ENCODE measurements at regions of chr5 and their contacts with region 1.

Region 1: DNA sequence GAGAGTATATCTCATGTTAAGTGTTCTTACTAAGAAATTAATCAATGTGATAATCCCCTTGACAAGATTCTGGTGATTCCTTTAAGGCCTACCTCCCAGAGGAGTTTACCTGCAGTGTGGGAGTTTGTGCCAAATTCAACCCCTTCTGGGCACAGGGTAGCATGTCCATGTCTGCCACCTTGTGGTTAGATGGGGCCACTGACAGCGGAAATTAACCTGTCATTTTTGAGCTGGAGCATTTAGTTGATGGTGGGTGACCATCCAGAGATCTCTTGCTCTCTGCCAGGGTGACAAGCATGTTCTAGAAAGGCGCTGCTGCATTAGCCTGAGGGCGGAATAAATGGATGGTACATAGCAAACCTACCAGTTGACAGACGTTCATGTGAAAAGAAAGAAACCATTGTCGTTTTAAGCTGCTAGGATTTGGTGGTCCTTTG is 132.2 kb downstream of the FBXO4 start:
- DNase-seq: peak; percentile 69
- ATAC-seq: peak; percentile 75
- H3K4me3 Mint-ChIP-seq: no peak overlapping the region
- H3K27ac Mint-ChIP-seq: no peak overlapping the region
- H3K4me1 Mint-ChIP-seq: no peaks in the 10 kb centered on the region
- H3K27me3 Mint-ChIP-seq: peaks cover 2% of the 10 kb centered on the region

Region 2: GRCh38 chr5:41707853-41708603 is 349.2 kb before region 1 on chr5:
- CTCF ChIA-PET with region 1: interaction called, 3 read pairs
- POLR2A ChIA-PET with region 1: no interaction called
- intact Hi-C with region 1: loop called in 1 of 2 experiments (anchors 5 kb)
- DNase-seq: no peak
- ATAC-seq: no peak
- H3K4me3 Mint-ChIP-seq: no peak overlapping the region
- H3K27ac Mint-ChIP-seq: no peak overlapping the region
- H3K4me1 Mint-ChIP-seq: no peaks in the 10 kb centered on the region
- H3K27me3 Mint-ChIP-seq: peaks cover 10% of the 10 kb centered on the region

Region 3: DNA sequence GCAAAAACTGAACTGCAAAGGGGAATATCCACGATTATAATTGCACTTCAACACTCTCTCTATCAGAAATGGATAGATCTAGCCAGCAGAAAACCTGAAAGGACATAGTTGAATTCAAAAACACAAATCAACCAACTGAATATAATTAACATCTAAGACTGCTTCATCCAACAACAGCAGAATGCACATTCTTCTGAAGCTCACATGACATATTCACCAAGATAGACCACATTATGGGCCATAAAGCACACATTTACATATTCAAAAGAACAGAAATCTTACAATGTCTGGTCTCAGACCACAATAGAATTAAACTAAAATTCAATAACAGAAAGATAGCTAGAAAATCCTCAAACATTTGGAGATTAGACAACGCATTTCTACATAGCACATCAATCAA is 13.9 kb before region 1 on chr5:
- CTCF ChIA-PET with region 1: interaction called, 12 read pairs
- POLR2A ChIA-PET with region 1: no interaction called
- intact Hi-C with region 1: no loop called
- DNase-seq: no peak
- ATAC-seq: no peak
- H3K4me3 Mint-ChIP-seq: no peak overlapping the region
- H3K27ac Mint-ChIP-seq: no peak overlapping the region
- H3K4me1 Mint-ChIP-seq: no peaks in the 10 kb centered on the region
- H3K27me3 Mint-ChIP-seq: peaks cover 24% of the 10 kb centered on the region

Region 4: DNA sequence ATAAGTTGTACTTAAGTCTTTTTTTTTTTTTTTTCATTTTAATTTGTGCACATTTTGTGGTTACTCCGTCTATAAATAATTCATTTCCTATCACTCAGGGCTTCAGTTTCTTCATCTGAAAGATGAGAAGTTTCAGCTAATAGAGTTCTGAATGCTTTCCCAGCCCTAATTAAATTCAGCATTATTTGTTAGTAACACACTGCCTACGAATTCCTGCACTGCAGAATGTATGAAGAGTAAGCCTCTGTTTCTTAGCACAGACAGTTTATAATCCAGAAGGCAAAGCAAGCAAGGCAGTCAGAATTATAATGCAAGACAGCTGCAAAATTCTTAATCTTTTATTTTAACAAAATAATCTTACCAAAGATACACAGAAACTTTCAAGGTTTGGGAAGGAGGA is 228.0 kb after region 1 on chr5:
- CTCF ChIA-PET with region 1: no interaction called
- POLR2A ChIA-PET with region 1: no interaction called
- intact Hi-C with region 1: no loop called
- DNase-seq: no peak
- ATAC-seq: no peak
- H3K4me3 Mint-ChIP-seq: no peak overlapping the region
- H3K27ac Mint-ChIP-seq: no peak overlapping the region
- H3K4me1 Mint-ChIP-seq: no peaks in the 10 kb centered on the region
- H3K27me3 Mint-ChIP-seq: no peaks in the 10 kb centered on the region

Measured in activated CD4-positive, alpha-beta T cell treated with anti-CD3 and anti-CD28 coated beads for 36 hours (primary cell).